ENCODE measurements at regions of chr19 and their contacts with region 1.

Region 1: GRCh38 chr19:57746580-57747471 is at the start of gene ZNF776:
- DNase-seq: peak; percentile 88
- ATAC-seq: peak; percentile 99
- H3K4me3 ChIP-seq: peak within 1 kb of the TSS; percentile 72 to 87
- H3K27ac ChIP-seq: peak within 1 kb of the TSS; percentile 86
- H3K4me1 ChIP-seq: 0 out of 2 replicates have a peak, but pooled peaks cover 2% of the 10 kb centered on the region
- H3K27me3 ChIP-seq: no peaks in the 10 kb centered on the region
- CTCF ChIP-seq: no peak
- total RNA-seq, gene ZNF776: 19.5 TPM

Region 2: DNA sequence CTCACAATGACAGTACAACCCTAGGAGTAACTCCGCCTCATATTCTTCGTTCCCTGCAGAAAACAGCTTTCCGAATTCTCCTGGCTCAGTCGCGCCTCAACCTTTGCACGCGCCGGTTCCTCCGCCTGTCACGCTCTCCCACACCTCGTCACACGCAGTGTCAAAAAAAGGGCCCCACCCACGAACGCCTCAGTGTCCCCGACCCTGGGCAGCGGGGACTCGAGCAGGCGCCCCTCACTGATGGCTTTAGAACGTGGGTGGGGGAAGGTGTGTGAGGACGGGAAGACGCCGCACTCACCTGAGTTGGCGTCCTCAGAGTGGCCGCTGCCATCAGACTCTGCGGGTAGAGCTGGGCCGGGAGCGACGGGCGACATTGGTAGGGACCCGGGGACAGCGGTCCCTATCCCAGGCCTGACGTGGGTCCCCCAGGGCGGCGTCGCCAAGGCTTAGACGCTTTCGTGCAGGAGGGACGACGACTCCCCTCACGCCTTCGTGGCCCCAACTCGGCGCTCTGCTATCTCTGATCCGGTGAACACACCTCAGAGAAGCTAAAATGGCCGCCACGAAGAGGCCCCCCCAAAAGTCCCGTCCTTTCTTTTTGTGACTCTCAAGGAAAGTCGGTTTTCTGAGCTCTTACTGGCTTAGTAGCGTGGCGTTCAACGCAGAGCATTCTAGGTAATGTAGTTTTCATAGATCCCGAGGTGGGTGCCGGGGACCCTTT is 38.0 kb before region 1 on chr19 and contains the start of gene ZNF154:
- CTCF ChIA-PET with region 1: no interaction called
- POLR2A ChIA-PET with region 1: no interaction called
- in situ Hi-C with region 1: no loop called
- intact Hi-C with region 1: no loop called
- DNase-seq: no peak
- ATAC-seq: no peak
- H3K4me3 ChIP-seq: no peak within 1 kb of the TSS
- H3K27ac ChIP-seq: no peak within 1 kb of the TSS
- H3K4me1 ChIP-seq: no peaks in the 10 kb centered on the region
- H3K27me3 ChIP-seq: no peaks in the 10 kb centered on the region
- CTCF ChIP-seq: no peak
- total RNA-seq, gene ZNF154: not detected

Region 3: GRCh38 chr19:57841122-57841763 is 94.4 kb after region 1 on chr19:
- CTCF ChIA-PET with region 1: no interaction called
- POLR2A ChIA-PET with region 1: interaction called, 11 read pairs
- in situ Hi-C with region 1: no loop called
- intact Hi-C with region 1: no loop called
- DNase-seq: no peak
- ATAC-seq: no peak
- H3K4me3 ChIP-seq: no peak overlapping the region
- H3K27ac ChIP-seq: no peak overlapping the region
- H3K4me1 ChIP-seq: no peaks in the 10 kb centered on the region
- H3K27me3 ChIP-seq: no peaks in the 10 kb centered on the region
- CTCF ChIP-seq: no peak

Region 4: GRCh38 chr19:58033741-58034471 is 287.1 kb after region 1 on chr19 and contains the start of gene ZSCAN1:
- CTCF ChIA-PET with region 1: no interaction called
- POLR2A ChIA-PET with region 1: no interaction called
- in situ Hi-C with region 1: no loop called
- intact Hi-C with region 1: no loop called
- DNase-seq: no peak
- ATAC-seq: no peak
- H3K4me3 ChIP-seq: no peak within 1 kb of the TSS
- H3K27ac ChIP-seq: no peak within 1 kb of the TSS
- H3K4me1 ChIP-seq: no peaks in the 10 kb centered on the region
- H3K27me3 ChIP-seq: no peaks in the 10 kb centered on the region
- CTCF ChIP-seq: no peak
- total RNA-seq, gene ZSCAN1: not detected

Measured in Panc1 (cell line).